ENCODE measurements at regions of chr5 and their contacts with region 1.

Region 1: GRCh38 chr5:17216176-17216973 is 1.1 kb upstream of the BASP1 start:
- DNase-seq: peak; percentile 85 to 93 (median 90)
- H3K4me3 ChIP-seq: peak overlapping the region in 6 of 7 experiments; percentile 38 to 97 (median 64)
- H3K27ac ChIP-seq: no peak overlapping the region
- H3K4me1 ChIP-seq: peaks cover 14 to 22% (median 19%) of the 10 kb centered on the region in 4 experiments
- H3K27me3 ChIP-seq: peaks cover 0 to 3% (median 0%) of the 10 kb centered on the region in 5 experiments

Region 2: GRCh38 chr5:17204133-17204489 is 12.3 kb before region 1 on chr5:
- CTCF ChIA-PET with region 1: interaction called, 12 read pairs
- POLR2A ChIA-PET with region 1: no interaction called
- DNase-seq: no peak
- H3K4me3 ChIP-seq: no peak overlapping the region
- H3K27ac ChIP-seq: no peak overlapping the region
- H3K4me1 ChIP-seq: no peaks in the 10 kb centered on the region
- H3K27me3 ChIP-seq: peaks cover 0 to 3% (median 1%) of the 10 kb centered on the region in 5 experiments

Region 3: DNA sequence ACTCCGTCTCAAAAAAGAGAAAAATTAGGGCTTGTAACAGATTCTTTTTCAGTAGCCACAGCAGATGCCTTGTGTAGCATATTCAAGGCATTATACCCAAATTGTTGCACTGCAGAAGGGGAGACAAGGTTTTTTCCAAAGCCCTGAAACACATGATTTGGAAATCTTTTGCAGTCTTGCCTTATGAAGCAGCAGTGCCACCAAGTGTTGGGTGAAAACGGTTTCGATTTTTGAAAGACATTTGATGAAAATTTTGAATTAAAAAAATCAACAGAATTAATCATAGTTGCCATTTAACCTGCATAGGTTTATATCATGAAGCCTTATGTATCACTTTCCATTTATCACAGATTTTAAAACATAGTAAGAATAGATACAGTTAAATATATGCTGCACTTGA is 897.3 kb after region 1 on chr5:
- CTCF ChIA-PET with region 1: interaction called, 67 read pairs
- POLR2A ChIA-PET with region 1: no interaction called
- DNase-seq: peak; percentile 52 to 78 (median 72)
- H3K4me3 ChIP-seq: no peak overlapping the region
- H3K27ac ChIP-seq: no peak overlapping the region
- H3K4me1 ChIP-seq: peaks cover 4 to 21% (median 16%) of the 10 kb centered on the region in 4 experiments
- H3K27me3 ChIP-seq: no peaks in the 10 kb centered on the region

Region 4: DNA sequence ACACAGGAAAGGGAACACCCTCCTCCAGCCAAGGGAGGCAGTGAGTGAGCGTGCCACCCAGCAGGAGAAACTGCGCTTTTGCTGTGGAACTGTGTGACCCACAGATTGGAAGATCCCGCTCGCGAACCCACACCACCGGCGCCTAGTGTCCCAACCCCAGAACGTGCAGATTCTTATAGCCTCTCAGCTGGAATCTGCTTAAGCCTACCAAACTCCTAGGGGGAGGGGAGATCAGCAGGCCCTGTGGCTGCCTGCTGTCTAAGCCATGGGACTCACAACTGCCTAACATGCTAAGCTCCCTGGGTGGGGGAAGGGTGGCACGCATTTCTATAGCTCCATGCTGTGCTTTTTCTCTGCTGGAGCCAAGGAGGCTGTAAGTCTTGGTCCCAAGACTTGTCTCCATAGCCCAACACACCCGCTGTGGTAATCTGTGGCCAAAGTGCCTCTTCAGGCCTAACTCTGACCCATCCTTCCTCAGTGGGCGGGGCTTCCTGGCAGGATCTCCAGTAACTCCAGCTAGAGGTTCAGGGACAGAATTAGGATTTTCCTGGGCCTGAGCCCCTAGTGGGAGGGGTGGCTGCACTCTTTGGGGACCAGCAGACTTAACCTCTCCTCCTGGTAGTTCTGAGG is 902.9 kb after region 1 on chr5:
- CTCF ChIA-PET with region 1: interaction called, 67 read pairs
- POLR2A ChIA-PET with region 1: no interaction called
- DNase-seq: no peak
- H3K4me3 ChIP-seq: no peak overlapping the region
- H3K27ac ChIP-seq: no peak overlapping the region
- H3K4me1 ChIP-seq: no peaks in the 10 kb centered on the region
- H3K27me3 ChIP-seq: no peaks in the 10 kb centered on the region

Region 5: GRCh38 chr5:18281682-18282557 is 1065.5 kb after region 1 on chr5:
- CTCF ChIA-PET with region 1: interaction called, 28 read pairs
- POLR2A ChIA-PET with region 1: no interaction called
- DNase-seq: peak; percentile 25 to 46 (median 41)
- H3K4me3 ChIP-seq: no peak overlapping the region
- H3K27ac ChIP-seq: no peak overlapping the region
- H3K4me1 ChIP-seq: no peaks in the 10 kb centered on the region
- H3K27me3 ChIP-seq: no peaks in the 10 kb centered on the region

Region 6: GRCh38 chr5:18305297-18305924 is 1089.0 kb after region 1 on chr5:
- CTCF ChIA-PET with region 1: interaction called, 56 read pairs
- POLR2A ChIA-PET with region 1: no interaction called
- DNase-seq: peak; percentile 29 to 54 (median 50)
- H3K4me3 ChIP-seq: no peak overlapping the region
- H3K27ac ChIP-seq: no peak overlapping the region
- H3K4me1 ChIP-seq: no peaks in the 10 kb centered on the region
- H3K27me3 ChIP-seq: no peaks in the 10 kb centered on the region

Region 7: DNA sequence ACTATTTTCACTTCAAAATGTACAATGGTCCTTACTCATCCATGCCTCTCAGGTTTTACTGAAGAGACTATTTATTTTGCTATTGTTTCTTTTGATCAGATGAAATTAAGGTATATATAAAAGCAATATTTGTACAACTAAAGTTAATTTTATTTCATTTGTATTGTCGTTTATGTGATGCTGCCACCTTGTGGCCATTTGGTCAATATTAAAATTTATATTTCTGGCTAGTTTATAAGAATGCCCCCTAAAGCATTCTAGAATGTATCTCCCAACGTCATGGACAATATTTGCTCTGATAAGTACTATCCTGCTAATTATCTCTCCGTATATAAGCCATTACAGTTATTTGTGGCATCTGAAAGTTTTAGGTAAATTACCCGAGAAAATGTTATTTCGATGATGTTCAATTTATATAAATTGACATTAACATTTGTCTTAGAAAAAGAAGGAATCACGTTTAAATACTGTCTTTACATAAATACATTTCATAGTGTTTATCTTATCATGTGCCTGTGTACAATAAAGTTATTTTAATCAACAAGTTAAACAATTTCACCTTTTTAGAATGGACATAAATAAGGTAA is 1097.9 kb after region 1 on chr5:
- CTCF ChIA-PET with region 1: interaction called, 17 read pairs
- POLR2A ChIA-PET with region 1: no interaction called
- DNase-seq: peak; percentile 34 to 68 (median 57)
- H3K4me3 ChIP-seq: no peak overlapping the region
- H3K27ac ChIP-seq: no peak overlapping the region
- H3K4me1 ChIP-seq: no peaks in the 10 kb centered on the region
- H3K27me3 ChIP-seq: no peaks in the 10 kb centered on the region